Caco-2 (cell line): ENCODE measurements at regions of chr17 and their contacts with region 1.

Region 1: DNA sequence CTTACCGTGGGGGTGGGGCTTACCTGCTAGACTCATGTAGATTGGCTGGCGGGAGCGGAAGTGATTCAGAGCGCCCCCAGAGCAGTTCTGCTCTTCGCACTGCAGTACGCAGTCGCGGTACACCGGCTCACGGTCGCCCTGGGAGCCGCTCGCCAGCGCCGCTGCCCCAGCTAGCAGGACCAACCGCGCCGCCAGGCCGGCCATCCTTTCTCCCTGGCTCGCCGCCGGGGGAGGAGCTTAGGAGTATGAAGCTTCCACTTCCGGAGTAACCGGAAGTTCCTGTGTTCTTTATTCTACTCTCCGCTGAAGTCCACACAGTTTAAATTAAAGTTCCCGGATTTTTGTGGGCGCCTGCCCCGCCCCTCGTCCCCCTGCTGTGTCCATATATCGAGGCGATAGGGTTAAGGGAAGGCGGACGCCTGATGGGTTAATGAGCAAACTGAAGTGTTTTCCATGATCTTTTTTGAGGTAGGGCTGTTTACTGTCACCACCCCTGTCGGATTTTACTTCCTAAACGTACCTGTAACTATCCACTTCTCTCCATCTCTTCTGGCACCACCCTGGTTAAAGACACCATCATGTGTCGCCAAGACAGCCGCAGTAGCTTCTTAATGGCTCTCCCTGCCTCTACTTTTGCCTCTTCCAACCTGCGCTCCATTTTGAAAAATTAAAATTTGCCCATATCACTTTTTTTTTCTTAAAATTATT is at the start of gene PGAP3:
- DNase-seq: peak; percentile 95 to 96
- H3K4me3 ChIP-seq: peak within 1 kb of the TSS; percentile 74
- H3K4me3 Mint-ChIP-seq: peak within 1 kb of the TSS; percentile 80
- H3K27ac Mint-ChIP-seq: peak within 1 kb of the TSS; percentile 73
- H3K4me1 ChIP-seq: peaks cover 20% of the 10 kb centered on the region
- H3K4me1 Mint-ChIP-seq: peaks cover 11% of the 10 kb centered on the region
- H3K27me3 ChIP-seq: no peaks in the 10 kb centered on the region
- H3K27me3 Mint-ChIP-seq: no peaks in the 10 kb centered on the region
- CTCF ChIP-seq: no peak
- total RNA-seq, gene PGAP3: 14.7 and 17.4 TPM in 2 replicates

Region 2: GRCh38 chr17:39722965-39723848 is 35.2 kb after region 1 on chr17:
- CTCF ChIA-PET with region 1: interaction called, 13 read pairs
- POLR2A ChIA-PET with region 1: no interaction called
- intact Hi-C with region 1: no loop called
- DNase-seq: peak in 1 of 2 experiments; percentile 47
- H3K4me3 ChIP-seq: no peak overlapping the region
- H3K4me3 Mint-ChIP-seq: no peak overlapping the region
- H3K27ac Mint-ChIP-seq: no peak overlapping the region
- H3K4me1 ChIP-seq: no peaks in the 10 kb centered on the region
- H3K4me1 Mint-ChIP-seq: no peaks in the 10 kb centered on the region
- H3K27me3 ChIP-seq: no peaks in the 10 kb centered on the region
- H3K27me3 Mint-ChIP-seq: no peaks in the 10 kb centered on the region
- CTCF ChIP-seq: no peak

Region 3: DNA sequence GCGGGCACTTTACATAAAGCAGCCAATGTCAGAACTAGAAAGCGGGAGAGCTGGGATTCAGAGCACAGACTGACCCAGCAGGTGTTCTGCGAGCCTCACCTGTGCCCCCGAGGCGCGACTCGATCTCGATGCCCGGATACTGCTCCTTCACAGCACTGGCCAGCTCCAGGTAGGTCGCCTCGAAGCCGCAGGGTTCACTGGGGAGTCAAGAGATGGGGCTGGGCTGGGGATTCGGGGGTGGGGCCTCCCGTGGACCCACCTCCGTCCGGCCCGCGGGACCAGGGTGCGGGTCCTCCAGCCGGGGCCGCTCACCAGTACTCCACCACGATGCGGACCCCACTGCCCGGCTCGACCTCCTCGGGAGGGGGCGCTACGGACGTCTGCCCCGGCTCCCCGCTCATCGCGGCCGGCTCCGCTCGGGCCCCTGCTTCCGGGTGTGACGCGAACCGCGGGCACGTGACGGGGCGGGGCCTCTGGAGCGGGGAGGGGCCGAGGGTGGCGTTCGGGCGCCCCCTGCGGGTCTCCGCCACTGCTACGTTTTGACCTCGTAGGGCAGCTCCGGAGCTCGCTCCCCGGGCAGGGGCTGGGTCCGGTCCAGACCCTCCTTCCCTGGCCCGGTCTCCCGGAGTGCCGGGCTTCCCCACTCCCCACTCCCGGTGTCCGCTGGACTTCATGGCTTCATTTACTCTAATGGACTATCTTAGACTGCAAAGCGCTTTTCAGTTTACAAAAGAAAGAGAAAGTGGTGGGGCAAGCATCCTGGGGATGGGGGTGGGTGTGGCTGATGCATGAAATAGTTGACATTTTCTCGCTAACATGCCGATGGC is 42.3 kb after region 1 on chr17 and contains the start of gene MIEN1:
- CTCF ChIA-PET with region 1: interaction called, 22 read pairs
- POLR2A ChIA-PET with region 1: interaction called, 11 read pairs
- intact Hi-C with region 1: loop called (anchors 2 kb)
- DNase-seq: peak; percentile 92 to 98
- H3K4me3 ChIP-seq: peak within 1 kb of the TSS; percentile 57
- H3K4me3 Mint-ChIP-seq: peak within 1 kb of the TSS; percentile 84
- H3K27ac Mint-ChIP-seq: peak within 1 kb of the TSS; percentile 91
- H3K4me1 ChIP-seq: peaks cover 11% of the 10 kb centered on the region
- H3K4me1 Mint-ChIP-seq: no peaks in the 10 kb centered on the region
- H3K27me3 ChIP-seq: no peaks in the 10 kb centered on the region
- H3K27me3 Mint-ChIP-seq: no peaks in the 10 kb centered on the region
- CTCF ChIP-seq: peak; percentile 74 to 95
- total RNA-seq, gene MIEN1: 42.9 and 46.3 TPM in 2 replicates